ENCODE measurements at regions of chr3 and their contacts with region 1.

Region 1: DNA sequence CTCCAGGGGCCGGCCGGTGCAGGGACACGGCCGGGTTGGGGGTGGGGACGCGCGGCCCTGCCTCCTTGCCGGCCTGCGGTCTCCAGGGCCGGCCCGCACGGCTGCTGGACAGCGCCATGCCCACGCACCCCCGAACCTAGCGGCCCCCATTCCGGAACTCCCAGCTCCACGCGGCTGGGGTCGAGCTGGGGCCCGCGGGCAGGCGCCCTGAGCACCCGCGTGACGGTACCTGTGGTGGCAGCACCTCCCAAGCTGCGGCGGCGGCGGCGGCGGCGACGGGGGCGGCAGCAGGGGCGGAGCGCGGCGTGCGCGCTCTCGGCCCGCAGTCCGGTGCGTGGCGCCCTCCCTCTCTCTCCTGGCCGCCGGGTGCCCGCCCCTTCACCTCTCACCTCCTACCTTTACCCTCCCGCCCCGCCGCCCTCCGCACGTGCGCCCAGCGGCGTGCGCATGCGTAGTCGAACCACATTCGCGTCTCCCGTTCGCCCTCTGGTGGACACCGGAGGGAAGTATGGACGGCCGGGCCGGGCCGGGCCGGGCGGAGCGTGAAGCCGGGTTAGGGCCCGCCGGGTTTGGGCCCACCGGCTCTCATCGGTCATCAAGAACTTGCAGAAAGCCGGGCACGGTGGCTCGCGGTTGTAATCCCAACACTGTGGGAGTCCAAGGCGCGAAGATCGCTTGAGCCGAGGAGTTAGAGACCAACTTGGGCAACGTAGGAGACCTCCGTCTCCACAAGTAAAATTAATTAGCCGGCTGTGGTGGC is at the start of gene SCAP:
- DNase-seq: peak; percentile 97
- H3K4me3 ChIP-seq: peak within 1 kb of the TSS; percentile 88
- H3K27ac ChIP-seq: peak within 1 kb of the TSS; percentile 28 to 81
- H3K4me1 ChIP-seq: peaks cover 23% of the 10 kb centered on the region
- H3K27me3 ChIP-seq: no peaks in the 10 kb centered on the region
- CTCF ChIP-seq: peak; percentile 97 to 100 (median 99)
- POLR2A ChIP-seq: peak; percentile 46
- total RNA-seq, gene SCAP: 276 to 313 TPM

Region 2: GRCh38 chr3:47409688-47410416 is 65.9 kb before region 1 on chr3:
- intact Hi-C with region 1: no loop called
- DNase-seq: no peak
- H3K4me3 ChIP-seq: no peak overlapping the region
- H3K27ac ChIP-seq: no peak overlapping the region
- H3K4me1 ChIP-seq: peaks cover 23% of the 10 kb centered on the region
- H3K27me3 ChIP-seq: no peaks in the 10 kb centered on the region
- CTCF ChIP-seq: no peak
- POLR2A ChIP-seq: no peak

Region 3: DNA sequence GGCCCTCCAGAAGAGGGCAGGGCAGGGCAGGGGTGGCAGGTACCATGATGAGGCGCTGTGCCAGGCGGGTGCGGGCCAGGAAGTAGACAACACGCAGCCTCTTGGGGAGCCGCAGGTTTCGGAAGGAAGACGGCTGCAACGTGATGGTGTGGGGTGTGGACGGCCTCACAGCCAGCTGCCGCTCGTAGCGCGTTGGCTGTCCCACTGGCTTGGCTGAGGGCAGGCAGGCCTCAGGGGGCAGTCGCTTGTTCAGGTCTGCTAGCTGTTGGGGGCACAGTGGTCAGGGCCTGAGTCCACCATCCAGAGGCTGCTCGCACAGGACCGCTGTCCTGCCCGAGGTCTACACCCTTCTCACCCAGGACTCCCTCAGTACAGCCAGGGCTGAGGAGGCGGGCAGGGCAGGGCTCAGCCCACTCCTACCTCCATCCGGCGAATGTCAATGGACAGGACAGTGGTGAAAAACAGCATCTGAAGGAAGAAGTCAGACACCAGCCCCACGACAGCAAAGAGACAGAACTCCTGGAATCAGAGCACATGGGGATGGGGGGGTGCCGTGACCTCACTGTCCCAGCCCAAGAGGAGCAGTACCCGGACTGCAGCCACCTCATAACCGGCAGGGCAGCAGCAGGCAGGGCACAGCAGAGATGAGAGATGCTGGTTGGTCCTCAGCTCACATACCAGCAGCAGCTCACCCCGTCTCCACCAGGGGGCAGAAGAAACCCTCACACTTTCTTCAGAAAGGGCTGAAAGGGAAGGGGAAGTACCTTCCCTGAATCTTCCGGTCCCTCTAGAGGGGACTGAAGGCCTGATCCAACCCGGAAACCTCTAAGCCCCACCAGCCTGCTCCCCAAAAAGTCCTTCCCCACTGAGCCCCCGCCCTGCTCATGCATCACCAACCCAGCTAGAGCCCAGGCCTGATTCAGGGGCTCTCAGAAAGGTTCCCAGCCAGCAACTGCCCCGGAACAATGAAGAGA is 55.0 kb before region 1 on chr3:
- intact Hi-C with region 1: loop called (anchors 5 kb)
- DNase-seq: peak; percentile 93
- H3K4me3 ChIP-seq: no peak overlapping the region
- H3K27ac ChIP-seq: peak overlapping the region; percentile 39 to 79
- H3K4me1 ChIP-seq: peaks cover 16% of the 10 kb centered on the region
- H3K27me3 ChIP-seq: no peaks in the 10 kb centered on the region
- CTCF ChIP-seq: peak; percentile 88 to 96 (median 96)
- POLR2A ChIP-seq: no peak

Measured in testis (tissue), 5 donors.